IMR-90 (cell line): ENCODE measurements at regions of chr1 and their contacts with region 1.

Region 1: DNA sequence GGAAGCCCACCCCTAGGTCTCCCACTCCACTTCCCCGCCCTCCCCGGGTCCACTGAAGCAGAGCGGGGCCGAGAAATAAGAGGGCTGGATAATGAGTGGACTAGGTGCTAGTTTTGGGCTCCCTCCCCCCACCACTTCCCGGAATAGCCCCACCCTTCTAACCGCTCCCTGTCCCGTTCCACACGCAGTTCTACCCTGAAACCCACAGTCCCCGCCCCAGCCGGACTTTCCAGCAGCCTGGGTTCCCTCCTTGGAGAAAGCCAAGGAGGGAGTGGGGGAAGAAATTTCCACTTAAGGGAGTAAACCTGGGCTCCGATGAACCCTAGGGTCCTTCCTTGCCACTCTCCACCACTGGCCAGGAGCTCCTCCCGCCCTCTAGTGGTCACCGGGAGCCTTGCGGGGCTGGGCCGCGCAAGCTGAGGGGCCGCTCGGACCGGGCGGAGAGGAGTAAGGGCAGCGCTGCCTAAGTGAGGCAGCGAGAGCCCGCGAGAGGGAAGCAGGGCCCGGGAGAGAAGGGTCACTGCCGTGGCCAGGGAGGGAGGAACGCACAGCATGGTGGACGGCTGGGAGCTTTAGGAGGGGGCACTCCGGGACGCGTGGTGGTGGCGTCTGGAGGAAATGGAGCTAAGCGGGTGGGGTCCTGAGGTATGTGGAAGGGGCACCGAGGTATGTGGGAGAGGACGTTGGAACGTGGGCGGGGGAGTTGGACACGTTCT is 14.3 kb downstream of the THBS3 start:
- DNase-seq: peak; percentile 81
- ATAC-seq: peak; percentile 86
- H3K4me3 ChIP-seq: peak overlapping the region; percentile 43
- H3K27ac ChIP-seq: peak overlapping the region; percentile 80
- H3K4me1 ChIP-seq: peaks cover 17% of the 10 kb centered on the region
- H3K27me3 ChIP-seq: no peaks in the 10 kb centered on the region
- CTCF ChIP-seq: peak; percentile 96
- POLR2A ChIP-seq: peak; percentile 73
- RAD21 ChIP-seq: peak; percentile 64

Region 2: DNA sequence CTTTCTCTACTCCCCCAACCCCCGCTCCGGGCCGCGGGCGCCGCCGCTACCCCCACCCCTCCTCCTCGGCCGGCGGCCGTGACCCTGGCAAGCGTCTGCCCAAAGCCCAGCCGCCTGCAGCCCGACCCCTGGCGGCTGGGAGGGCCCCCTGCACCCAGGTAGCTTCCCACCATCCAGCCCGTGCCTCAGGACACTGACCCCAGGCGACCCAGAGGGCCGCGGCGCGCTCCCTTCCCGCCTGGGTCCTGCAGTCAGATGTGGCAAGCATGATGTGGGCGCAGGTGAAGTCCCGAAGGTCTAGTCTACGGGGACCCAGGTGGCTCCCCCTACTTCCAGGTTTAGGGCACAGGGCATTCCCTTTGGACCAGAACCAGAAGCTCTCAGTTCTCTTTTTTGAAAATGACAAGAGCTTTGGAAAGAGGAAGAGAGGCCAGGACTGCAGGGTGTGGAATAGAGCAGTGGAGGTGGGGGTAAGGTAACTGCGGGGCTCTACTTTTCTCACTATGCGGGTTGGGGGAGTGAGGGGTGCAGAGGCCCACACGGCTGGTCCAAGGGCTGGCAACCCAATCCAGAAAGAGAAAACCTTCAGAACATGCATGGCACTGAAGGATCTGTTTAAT is 1246.7 kb before region 1 on chr1 and contains the start of gene DENND4B:
- CTCF ChIA-PET with region 1: no interaction called
- POLR2A ChIA-PET with region 1: no interaction called
- dilution Hi-C with region 1: no loop called
- in situ Hi-C with region 1: no loop called
- intact Hi-C with region 1: no loop called
- DNase-seq: peak; percentile 65
- ATAC-seq: peak; percentile 95
- H3K4me3 ChIP-seq: peak within 1 kb of the TSS; percentile 98
- H3K27ac ChIP-seq: peak within 1 kb of the TSS; percentile 97
- H3K4me1 ChIP-seq: peaks cover 9% of the 10 kb centered on the region
- H3K27me3 ChIP-seq: no peaks in the 10 kb centered on the region
- CTCF ChIP-seq: peak; percentile 92
- POLR2A ChIP-seq: no peak
- RAD21 ChIP-seq: peak; percentile 71
- total RNA-seq, gene DENND4B: 1.8 and 2.5 TPM in 2 replicates

Region 3: GRCh38 chr1:154304664-154305337 is 888.6 kb before region 1 on chr1:
- CTCF ChIA-PET with region 1: no interaction called
- POLR2A ChIA-PET with region 1: no interaction called
- dilution Hi-C with region 1: no loop called
- in situ Hi-C with region 1: no loop called
- intact Hi-C with region 1: no loop called
- DNase-seq: no peak
- ATAC-seq: no peak
- H3K4me3 ChIP-seq: no peak overlapping the region
- H3K27ac ChIP-seq: no peak overlapping the region
- H3K4me1 ChIP-seq: no peaks in the 10 kb centered on the region
- H3K27me3 ChIP-seq: peaks cover 4% of the 10 kb centered on the region
- CTCF ChIP-seq: no peak
- POLR2A ChIP-seq: no peak
- RAD21 ChIP-seq: no peak

Region 4: GRCh38 chr1:155063550-155064110 is 129.8 kb before region 1 on chr1 and contains the start of gene EFNA4:
- CTCF ChIA-PET with region 1: no interaction called
- POLR2A ChIA-PET with region 1: no interaction called
- dilution Hi-C with region 1: no loop called
- in situ Hi-C with region 1: no loop called
- intact Hi-C with region 1: no loop called
- DNase-seq: peak; percentile 80
- ATAC-seq: peak; percentile 91
- H3K4me3 ChIP-seq: peak within 1 kb of the TSS; percentile 90
- H3K27ac ChIP-seq: peak within 1 kb of the TSS; percentile 44
- H3K4me1 ChIP-seq: peaks cover 4% of the 10 kb centered on the region; the same call in 1 of the 2 replicates
- H3K27me3 ChIP-seq: no peaks in the 10 kb centered on the region
- CTCF ChIP-seq: no peak
- POLR2A ChIP-seq: peak; percentile 53; the same call in 1 of the 2 replicates
- RAD21 ChIP-seq: no peak
- total RNA-seq, gene EFNA4: 3.3 and 3.8 TPM in 2 replicates

Region 5: GRCh38 chr1:155227261-155228095 is 34.0 kb after region 1 on chr1:
- CTCF ChIA-PET with region 1: interaction called, 11 read pairs
- POLR2A ChIA-PET with region 1: no interaction called
- dilution Hi-C with region 1: no loop called
- in situ Hi-C with region 1: no loop called
- intact Hi-C with region 1: no loop called
- DNase-seq: peak; percentile 99
- ATAC-seq: peak; percentile 94
- H3K4me3 ChIP-seq: peak overlapping the region; percentile 49
- H3K27ac ChIP-seq: peak overlapping the region; percentile 87
- H3K4me1 ChIP-seq: peaks cover 22% of the 10 kb centered on the region
- H3K27me3 ChIP-seq: no peaks in the 10 kb centered on the region
- CTCF ChIP-seq: no peak
- POLR2A ChIP-seq: peak; percentile 85
- RAD21 ChIP-seq: no peak